Common myeloid progenitor, CD34-positive (primary cell): ENCODE measurements at regions of chr22 and their contacts with region 1.

Region 1: GRCh38 chr22:22576244-22576988 is 17.4 kb upstream of the PRAME start:
- DNase-seq: peak; percentile 22 to 52 (median 46)
- H3K4me3 ChIP-seq: no peak overlapping the region
- H3K27ac ChIP-seq: no peak overlapping the region
- H3K4me1 ChIP-seq: no peaks in the 10 kb centered on the region
- H3K27me3 ChIP-seq: peaks cover 0 to 12% (median 2%) of the 10 kb centered on the region in 5 experiments

Region 2: DNA sequence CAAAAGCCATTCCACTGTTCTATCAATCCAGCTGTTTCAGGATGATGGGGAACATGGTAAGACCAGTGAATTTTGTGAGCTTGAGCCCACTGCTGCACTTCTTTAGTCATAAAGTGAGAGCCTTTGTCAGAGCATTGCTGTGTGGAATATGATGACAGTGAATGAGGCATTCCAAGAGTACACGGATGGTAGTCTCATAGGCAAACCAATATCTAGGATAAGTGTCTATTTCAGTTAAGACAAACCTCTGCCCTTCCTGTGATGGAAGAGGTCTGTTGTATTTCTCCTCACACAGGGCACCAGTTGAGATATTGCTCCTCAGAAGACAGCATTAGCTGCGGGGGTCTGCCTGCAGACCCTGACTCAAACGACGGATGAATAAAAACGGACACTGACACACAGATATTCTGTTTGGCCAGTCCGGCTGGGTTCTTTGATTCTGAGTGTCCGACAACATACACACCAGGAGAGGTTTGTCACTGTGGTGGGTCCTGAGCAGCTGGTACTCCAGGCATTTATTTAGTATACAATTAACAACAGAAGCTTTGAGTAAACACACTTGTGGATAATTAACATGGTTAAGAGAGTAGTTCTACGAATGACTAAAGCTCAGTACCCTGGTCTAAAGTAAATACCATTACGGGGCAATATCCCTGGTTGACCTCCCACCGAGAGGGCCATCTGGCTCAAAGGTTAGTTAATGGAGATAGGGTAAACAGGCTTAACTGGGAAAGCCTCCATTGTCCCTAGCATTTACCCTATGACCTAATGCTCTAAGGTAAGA is 189.6 kb before region 1 on chr22:
- CTCF ChIA-PET with region 1: no interaction called
- POLR2A ChIA-PET with region 1: no interaction called
- DNase-seq: no peak
- H3K4me3 ChIP-seq: no peak overlapping the region
- H3K27ac ChIP-seq: no peak overlapping the region
- H3K4me1 ChIP-seq: no peaks in the 10 kb centered on the region
- H3K27me3 ChIP-seq: peaks cover 0 to 30% (median 3%) of the 10 kb centered on the region in 5 experiments

Region 3: GRCh38 chr22:22558972-22559603 is 17.3 kb before region 1 on chr22 and contains the start of gene PRAME:
- CTCF ChIA-PET with region 1: interaction called, 13 read pairs
- POLR2A ChIA-PET with region 1: interaction called, 3 read pairs
- DNase-seq: peak; percentile 84 to 91 (median 88)
- H3K4me3 ChIP-seq: no peak within 1 kb of the TSS
- H3K27ac ChIP-seq: peak within 1 kb of the TSS in 1 of 2 experiments; percentile 93
- H3K4me1 ChIP-seq: peaks cover 0 to 2% (median 0%) of the 10 kb centered on the region in 4 experiments
- H3K27me3 ChIP-seq: no peaks in the 10 kb centered on the region

Region 4: DNA sequence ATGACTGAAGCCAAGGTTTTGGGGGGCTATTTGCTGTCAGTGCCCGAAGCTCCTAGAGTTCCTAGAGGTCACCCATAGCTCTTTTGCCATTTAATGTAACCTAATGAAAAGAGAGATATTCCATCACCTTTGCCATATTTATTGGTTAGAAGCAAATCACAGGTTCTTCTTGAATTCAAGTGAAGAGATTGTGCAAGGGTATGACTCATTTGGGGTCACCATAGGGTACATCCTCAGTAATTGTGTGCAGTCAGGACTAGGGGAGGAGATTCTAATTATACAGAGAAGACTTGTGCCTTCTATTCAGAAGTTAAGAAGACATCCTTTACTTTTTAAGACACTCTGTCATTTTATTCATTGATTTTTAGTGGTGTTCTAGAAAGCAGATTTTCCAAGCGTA is 10.4 kb before region 1 on chr22:
- CTCF ChIA-PET with region 1: interaction called, 13 read pairs
- POLR2A ChIA-PET with region 1: interaction called, 3 read pairs
- DNase-seq: peak in 1 of 3 donors; percentile 22
- H3K4me3 ChIP-seq: no peak overlapping the region
- H3K27ac ChIP-seq: no peak overlapping the region
- H3K4me1 ChIP-seq: no peaks in the 10 kb centered on the region
- H3K27me3 ChIP-seq: peaks cover 0 to 13% (median 2%) of the 10 kb centered on the region in 5 experiments

Region 5: GRCh38 chr22:22591348-22592299 is 15.2 kb after region 1 on chr22:
- CTCF ChIA-PET with region 1: interaction called, 42 read pairs
- POLR2A ChIA-PET with region 1: interaction called, 3 read pairs
- DNase-seq: peak in 1 of 3 donors; percentile 7
- H3K4me3 ChIP-seq: no peak overlapping the region
- H3K27ac ChIP-seq: no peak overlapping the region
- H3K4me1 ChIP-seq: no peaks in the 10 kb centered on the region
- H3K27me3 ChIP-seq: peaks cover 0 to 4% (median 0%) of the 10 kb centered on the region in 5 experiments